ENCODE measurements at regions of chr21 and their contacts with region 1.

Region 1: GRCh38 chr21:35940074-35940927 is 120.0 kb downstream of the SETD4 start:
- DNase-seq: peak; percentile 43 to 60
- H3K4me3 ChIP-seq: no peak overlapping the region
- H3K4me3 Mint-ChIP-seq: peak overlapping the region; percentile 40
- H3K27ac Mint-ChIP-seq: no peak overlapping the region
- H3K4me1 ChIP-seq: peaks cover 4% of the 10 kb centered on the region; the same call in 1 of the 2 replicates
- H3K4me1 Mint-ChIP-seq: no peaks in the 10 kb centered on the region
- H3K27me3 ChIP-seq: no peaks in the 10 kb centered on the region
- H3K27me3 Mint-ChIP-seq: no peaks in the 10 kb centered on the region
- CTCF ChIP-seq: peak; percentile 36 to 66

Region 2: GRCh38 chr21:35882791-35883240 is 57.5 kb before region 1 on chr21:
- CTCF ChIA-PET with region 1: no interaction called
- POLR2A ChIA-PET with region 1: no interaction called
- intact Hi-C with region 1: loop called (anchors 1 kb)
- DNase-seq: no peak
- H3K4me3 ChIP-seq: no peak overlapping the region
- H3K4me3 Mint-ChIP-seq: no peak overlapping the region
- H3K27ac Mint-ChIP-seq: no peak overlapping the region
- H3K4me1 ChIP-seq: no peaks in the 10 kb centered on the region
- H3K4me1 Mint-ChIP-seq: peaks cover 7% of the 10 kb centered on the region
- H3K27me3 ChIP-seq: no peaks in the 10 kb centered on the region
- H3K27me3 Mint-ChIP-seq: no peaks in the 10 kb centered on the region
- CTCF ChIP-seq: no peak